ENCODE measurements at regions of chr10 and their contacts with region 1.

Region 1: GRCh38 chr10:70549962-70550458 is 52.5 kb downstream of the PRF1 start:
- DNase-seq: peak; percentile 81
- H3K4me3 ChIP-seq: no peak overlapping the region
- H3K27ac ChIP-seq: no peak overlapping the region
- H3K4me1 ChIP-seq: peaks cover 4% of the 10 kb centered on the region
- H3K27me3 ChIP-seq: no peaks in the 10 kb centered on the region
- CTCF ChIP-seq: peak; percentile 71 to 94 (median 89)
- POLR2A ChIP-seq: no peak

Region 2: GRCh38 chr10:70461215-70461986 is 88.6 kb before region 1 on chr10:
- intact Hi-C with region 1: loop called (anchors 10 kb)
- DNase-seq: peak; percentile 80
- H3K4me3 ChIP-seq: no peak overlapping the region
- H3K27ac ChIP-seq: no peak overlapping the region
- H3K4me1 ChIP-seq: no peaks in the 10 kb centered on the region
- H3K27me3 ChIP-seq: no peaks in the 10 kb centered on the region
- CTCF ChIP-seq: peak; percentile 78 to 81 (median 80)
- POLR2A ChIP-seq: no peak

Region 3: GRCh38 chr10:70758757-70759514 is 208.9 kb after region 1 on chr10:
- intact Hi-C with region 1: loop called (anchors 5 kb)
- DNase-seq: peak; percentile 88
- H3K4me3 ChIP-seq: no peak overlapping the region
- H3K27ac ChIP-seq: no peak overlapping the region
- H3K4me1 ChIP-seq: no peaks in the 10 kb centered on the region
- H3K27me3 ChIP-seq: no peaks in the 10 kb centered on the region
- CTCF ChIP-seq: peak; percentile 48 to 75 (median 74)
- POLR2A ChIP-seq: no peak

Region 4: GRCh38 chr10:70880077-70880534 is 330.1 kb after region 1 on chr10:
- intact Hi-C with region 1: loop called (anchors 10 kb)
- DNase-seq: peak; percentile 91
- H3K4me3 ChIP-seq: no peak overlapping the region
- H3K27ac ChIP-seq: no peak overlapping the region
- H3K4me1 ChIP-seq: no peaks in the 10 kb centered on the region
- H3K27me3 ChIP-seq: no peaks in the 10 kb centered on the region
- CTCF ChIP-seq: peak; percentile 92 to 96 (median 92)
- POLR2A ChIP-seq: no peak

Measured in testis (tissue), 5 donors.